H1 (cell line): ENCODE measurements at regions of chr1 and their contacts with region 1.

Region 1: DNA sequence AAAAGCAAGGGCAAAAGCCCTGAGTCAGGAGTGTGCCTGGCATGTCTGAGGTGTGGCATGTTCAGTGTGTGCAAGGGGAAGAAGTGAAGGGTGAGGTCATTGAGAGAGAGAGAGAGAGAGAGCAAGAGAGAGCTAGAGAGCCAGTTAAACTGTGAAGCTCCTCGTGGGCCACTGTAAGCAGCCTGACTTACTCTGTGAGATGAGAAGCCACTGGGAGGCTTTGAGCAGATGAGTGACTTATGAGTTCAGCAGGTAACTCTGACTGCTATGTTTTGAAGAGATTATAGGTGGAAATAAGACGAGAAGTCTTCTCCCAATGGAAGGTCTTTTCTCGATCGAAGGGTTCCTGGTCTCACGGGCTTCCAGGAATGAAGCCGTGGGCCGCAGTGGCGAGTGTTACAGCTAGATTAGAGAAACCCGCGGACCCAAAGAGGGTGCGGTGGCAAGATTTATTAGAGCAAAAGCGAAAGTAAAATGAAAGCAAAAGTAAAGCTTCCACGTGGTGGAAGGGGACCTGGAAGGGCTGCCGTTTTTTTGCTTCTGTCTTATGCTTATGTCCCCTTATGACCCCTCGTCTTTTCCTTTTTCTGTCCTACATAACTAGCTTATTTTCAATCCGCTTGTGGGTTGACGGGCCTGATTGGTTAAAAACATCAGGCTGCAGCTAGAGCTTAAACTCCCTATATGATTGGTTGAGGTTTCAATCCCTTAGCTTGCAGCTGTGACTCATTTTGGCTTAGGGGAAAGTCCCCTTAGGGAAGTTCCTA is 323.1 kb upstream of the FAM78B start:
- DNase-seq: no peak
- H3K4me3 ChIP-seq: no peak overlapping the region
- H3K27ac ChIP-seq: no peak overlapping the region
- H3K4me1 ChIP-seq: no peaks in the 10 kb centered on the region
- H3K27me3 ChIP-seq: no peaks in the 10 kb centered on the region
- CTCF ChIP-seq: no peak
- EP300 ChIP-seq: no peak
- POLR2A ChIP-seq: no peak
- RAD21 ChIP-seq: no peak

Region 2: DNA sequence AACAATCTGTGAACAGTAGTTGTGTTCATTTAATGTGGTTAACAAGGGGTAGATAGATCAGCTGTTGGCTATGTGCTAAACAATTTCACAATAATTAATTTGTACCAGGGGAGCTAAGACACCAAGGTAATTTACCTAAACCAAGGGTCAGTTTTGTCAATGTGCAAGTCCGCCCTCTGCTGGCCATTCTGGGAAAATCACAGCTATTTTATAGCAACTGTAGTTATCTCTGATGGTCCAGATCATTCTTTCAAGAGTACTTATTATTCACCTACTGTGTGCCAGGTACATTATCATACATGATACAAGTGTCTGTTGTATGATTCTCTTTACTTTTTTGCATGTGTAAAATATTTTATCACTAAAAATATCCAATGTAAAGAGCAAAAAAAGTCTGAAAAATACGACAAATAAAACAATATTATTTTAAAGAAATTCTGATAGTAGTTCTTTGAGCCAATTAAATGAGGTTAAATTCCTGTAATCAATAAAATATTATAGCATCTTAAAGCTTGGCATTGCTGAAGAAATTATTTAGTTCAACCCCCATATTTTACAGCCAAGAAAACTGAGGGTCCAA is 10.7 kb before region 1 on chr1:
- CTCF ChIA-PET with region 1: interaction called, 25 read pairs
- POLR2A ChIA-PET with region 1: no interaction called
- DNase-seq: peak; percentile 19 to 78
- H3K4me3 ChIP-seq: no peak overlapping the region
- H3K27ac ChIP-seq: no peak overlapping the region
- H3K4me1 ChIP-seq: peaks cover 0 to 3% (median under 1%) of the 10 kb centered on the region in 4 experiments; a peak in 1 of 7 replicates
- H3K27me3 ChIP-seq: no peaks in the 10 kb centered on the region
- CTCF ChIP-seq: peak in 2 of 3 experiments; percentile 63 to 66; a peak in 3 of 4 replicates
- EP300 ChIP-seq: no peak
- POLR2A ChIP-seq: no peak
- RAD21 ChIP-seq: peak; percentile 65 to 80